Cardiac septum (tissue), 1 donor: ENCODE measurements at regions of chr4 and their contacts with region 1.

Region 1: GRCh38 chr4:54233277-54233696 is 4.2 kb downstream of the PDGFRA start:
- DNase-seq: peak; percentile 92

Region 2: GRCh38 chr4:52234561-52235440 is 1998.5 kb before region 1 on chr4:
- intact Hi-C with region 1: loop called (anchors 5 kb)
- DNase-seq: no peak

Region 3: DNA sequence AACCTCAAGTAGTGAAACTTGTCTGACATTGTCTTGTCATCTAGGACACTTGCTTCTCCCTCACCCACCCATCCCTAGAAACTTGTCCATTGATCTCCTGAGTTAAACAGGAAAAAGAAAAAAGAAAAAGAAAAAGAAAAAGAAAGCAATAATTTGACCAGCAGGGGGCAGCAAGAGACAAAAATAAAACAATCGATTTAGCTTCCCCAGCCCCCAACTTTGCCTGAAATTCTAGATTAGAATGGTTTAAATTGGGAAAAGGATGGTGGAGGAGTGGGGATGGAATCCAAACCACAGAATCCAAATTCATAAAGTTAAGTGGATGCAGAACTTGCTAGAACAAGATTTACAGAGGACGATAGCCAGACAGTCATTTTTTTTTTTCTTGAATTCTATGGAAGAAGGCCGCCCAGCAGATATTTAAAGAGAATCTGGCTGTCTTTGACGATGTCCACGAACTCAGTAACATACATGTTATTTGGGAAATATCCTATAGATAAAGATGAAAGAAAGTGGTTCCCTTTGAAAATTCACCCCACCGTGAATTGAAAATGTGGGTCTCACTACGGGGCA is 1857.1 kb before region 1 on chr4:
- intact Hi-C with region 1: loop called (anchors 10 kb)
- DNase-seq: no peak

Region 4: GRCh38 chr4:53015681-53016080 is 1217.6 kb before region 1 on chr4:
- intact Hi-C with region 1: loop called (anchors 2 kb)
- DNase-seq: no peak

Region 5: DNA sequence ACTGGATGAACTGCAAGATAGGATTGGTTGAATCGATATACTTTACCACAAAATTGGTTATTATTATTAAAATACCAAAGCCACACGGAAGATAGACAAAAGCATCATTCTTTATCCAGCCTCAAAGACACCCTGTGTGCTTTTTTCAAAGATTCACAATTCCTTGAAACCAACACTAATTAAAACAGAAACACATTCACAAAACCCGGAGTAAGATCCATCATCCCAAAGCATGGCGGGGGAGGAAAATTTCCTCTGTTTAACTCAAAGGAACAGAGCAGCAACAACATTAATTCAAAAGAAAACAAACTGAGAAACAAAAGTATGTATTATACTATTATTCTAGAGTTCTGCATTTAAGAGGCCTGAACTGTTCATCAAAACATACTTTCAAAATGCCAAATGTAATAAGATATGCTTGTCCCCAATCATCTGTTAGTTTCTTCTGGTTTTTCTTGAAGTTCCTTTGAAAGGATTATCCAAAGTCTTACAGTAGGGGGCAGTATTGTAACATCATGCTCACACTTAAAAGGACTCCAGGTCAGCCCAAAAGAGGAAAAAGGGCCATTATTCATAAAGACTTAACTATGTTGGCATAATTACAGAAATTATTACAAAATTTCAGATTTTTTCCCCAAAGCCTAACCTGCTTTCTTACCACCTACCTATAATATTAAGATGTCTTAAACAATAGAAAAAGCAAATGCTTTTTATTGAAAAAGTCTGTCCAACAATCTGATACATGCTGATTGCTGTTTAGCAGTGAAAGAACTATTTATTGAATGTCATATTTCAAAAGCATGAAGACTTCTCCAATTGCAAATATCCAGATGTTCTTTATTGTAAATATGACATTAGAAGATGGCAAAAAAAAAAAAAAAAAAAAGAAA is 1036.2 kb before region 1 on chr4:
- intact Hi-C with region 1: loop called (anchors 2 kb)
- DNase-seq: no peak

Region 6: DNA sequence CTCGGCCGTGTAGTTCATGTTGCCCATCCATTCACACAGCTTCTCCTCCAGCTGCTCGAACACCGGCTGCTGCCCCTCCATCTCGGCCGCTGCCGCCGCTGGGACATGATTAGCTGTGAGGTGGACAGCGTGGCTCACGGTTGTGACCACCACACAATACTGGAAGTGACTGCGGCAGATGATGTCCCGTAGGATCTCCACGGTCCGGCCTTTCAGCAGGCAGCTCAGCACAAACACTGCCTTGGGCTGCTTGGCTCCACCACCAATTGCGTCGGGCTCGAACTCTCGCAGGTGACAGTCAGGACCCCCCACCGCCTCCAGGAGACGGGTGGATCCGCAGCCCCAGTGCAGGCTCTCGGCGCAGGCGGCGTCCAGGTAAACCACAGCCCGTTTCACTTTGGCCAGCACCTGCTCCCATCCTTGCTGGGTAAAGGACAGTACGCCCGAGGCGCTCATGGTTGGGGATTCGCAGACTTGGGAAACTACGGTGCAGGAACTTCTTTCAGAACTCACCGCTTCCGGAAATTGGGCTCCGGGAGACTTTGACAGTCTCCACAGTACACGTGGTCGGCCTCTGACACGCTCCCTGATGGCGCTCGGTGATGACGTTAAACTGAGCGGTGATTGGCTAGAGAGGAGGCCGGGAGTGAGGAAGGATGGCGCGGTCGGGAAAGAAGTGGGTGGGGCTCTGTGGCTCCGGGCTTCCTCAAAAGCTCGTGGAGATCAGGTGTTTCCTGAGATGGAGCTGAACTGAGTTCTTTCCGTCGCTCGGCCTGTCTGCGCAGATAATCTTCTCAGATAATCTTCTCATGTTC is 867.6 kb before region 1 on chr4 and contains the start of gene SCFD2:
- intact Hi-C with region 1: loop called (anchors 5 kb)
- DNase-seq: peak; percentile 98
- total RNA-seq, gene SCFD2: 9.7 TPM

Region 7: GRCh38 chr4:53908661-53909078 is 324.6 kb before region 1 on chr4:
- intact Hi-C with region 1: loop called (anchors 2 kb)
- DNase-seq: no peak

Region 8: GRCh38 chr4:54077812-54078211 is 155.5 kb before region 1 on chr4:
- intact Hi-C with region 1: no loop called
- DNase-seq: no peak

Region 9: GRCh38 chr4:54255876-54256275 is 22.6 kb after region 1 on chr4:
- intact Hi-C with region 1: no loop called
- DNase-seq: no peak

Region 10: DNA sequence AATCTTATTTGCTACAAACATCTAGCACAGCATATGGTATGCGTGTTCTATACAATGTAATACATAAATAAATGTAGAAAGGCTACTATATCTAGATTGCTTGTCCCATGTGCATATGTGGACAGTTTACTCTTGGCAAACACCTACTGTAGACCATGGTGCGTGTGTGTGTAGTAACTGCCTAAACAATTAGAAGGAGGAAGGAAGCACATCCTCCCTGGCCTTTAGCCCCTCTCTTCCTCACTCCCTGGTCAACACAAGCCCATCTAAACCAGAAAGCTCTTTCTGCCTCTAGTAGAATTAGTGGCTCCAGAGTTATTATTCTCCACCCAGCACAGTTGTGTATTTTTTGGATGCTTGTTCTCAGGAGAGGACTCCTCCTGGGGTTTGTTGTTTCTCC is 818.2 kb after region 1 on chr4:
- intact Hi-C with region 1: no loop called
- DNase-seq: no peak